Natural killer cell (primary cell): ENCODE measurements at regions of chr14 and their contacts with region 1.

Region 1: DNA sequence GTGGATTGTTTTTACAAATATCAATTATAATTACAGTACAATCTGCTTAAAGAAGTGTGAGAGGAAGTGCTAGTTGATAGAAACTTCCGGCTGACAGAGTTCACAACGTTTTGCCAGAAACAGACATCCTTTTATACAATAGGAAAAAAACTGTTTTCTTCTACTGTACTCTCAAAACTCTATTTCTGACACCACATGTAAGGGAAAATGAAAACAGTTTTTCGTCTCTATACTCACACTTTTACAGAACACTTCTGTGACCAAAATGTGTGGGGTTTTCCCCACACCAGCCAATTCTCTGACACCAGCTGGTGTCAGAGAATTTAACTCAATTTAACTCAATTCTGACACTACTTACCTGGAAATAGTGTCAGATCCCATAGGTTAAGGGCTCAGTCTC is 24.2 kb upstream of the HIF1A start:
- DNase-seq: peak; percentile 23 to 84
- ATAC-seq: peak; percentile 92 to 96 (median 94)
- H3K4me3 ChIP-seq: no peak overlapping the region
- H3K4me3 Mint-ChIP-seq: no peak overlapping the region
- H3K27ac ChIP-seq: peak overlapping the region; percentile 99
- H3K27ac Mint-ChIP-seq: no peak overlapping the region
- H3K4me1 ChIP-seq: peaks cover 35% of the 10 kb centered on the region
- H3K4me1 Mint-ChIP-seq: peaks cover 4 to 6% of the 10 kb centered on the region in 2 donors
- H3K27me3 ChIP-seq: no peaks in the 10 kb centered on the region
- H3K27me3 Mint-ChIP-seq: no peaks in the 10 kb centered on the region
- CTCF ChIP-seq: no peak

Region 2: DNA sequence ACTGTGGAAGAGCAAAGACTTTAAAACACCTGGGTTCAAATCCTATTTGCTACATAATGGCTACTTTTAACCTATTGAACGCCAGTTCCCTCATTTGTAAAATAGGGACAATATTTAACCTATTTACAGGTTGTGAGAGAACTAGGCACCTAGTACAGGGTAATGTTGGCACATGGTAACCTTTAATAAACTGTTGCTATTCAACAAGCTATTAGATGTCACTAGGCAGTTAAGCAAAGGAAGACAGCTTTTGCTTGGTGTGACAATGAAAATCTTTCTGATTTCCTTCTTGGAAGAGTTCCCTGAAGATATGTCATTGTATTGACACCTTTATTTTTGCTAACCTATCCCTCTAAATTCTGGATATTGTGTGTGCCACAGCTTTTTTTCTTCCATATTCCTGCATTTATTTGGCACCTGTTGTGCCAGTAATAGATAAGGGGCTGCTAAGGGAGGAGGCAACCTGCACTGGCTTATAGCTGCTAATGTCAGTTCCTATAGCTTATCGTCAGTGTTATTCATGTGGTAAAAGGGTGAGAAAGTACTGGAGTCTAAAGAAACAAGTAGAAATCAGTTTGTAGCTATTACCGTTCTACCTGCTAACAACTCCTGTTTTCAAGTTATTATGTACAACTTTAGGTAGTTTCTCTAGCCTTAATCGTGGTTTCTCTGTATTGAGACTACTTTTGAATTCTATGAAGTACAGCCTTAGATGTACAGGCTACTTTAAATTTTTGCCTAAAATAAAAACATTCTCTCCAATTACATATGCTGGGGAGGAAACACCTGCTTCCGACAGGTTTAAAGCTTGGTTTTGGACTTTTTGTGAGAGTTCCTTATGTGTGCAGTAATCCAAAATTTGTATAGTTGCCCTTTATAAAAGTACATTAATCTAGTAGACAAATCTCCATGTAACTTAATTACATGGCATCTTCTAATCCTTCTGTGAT is 48.5 kb after region 1 on chr14:
- intact Hi-C with region 1: loop called (anchors 2 kb)
- DNase-seq: peak in 1 of 2 donors; percentile 60
- ATAC-seq: peak; percentile 87 to 91 (median 90)
- H3K4me3 ChIP-seq: no peak overlapping the region
- H3K4me3 Mint-ChIP-seq: peak overlapping the region; percentile 76
- H3K27ac ChIP-seq: peak overlapping the region; percentile 42
- H3K27ac Mint-ChIP-seq: peak overlapping the region; percentile 76 to 87
- H3K4me1 ChIP-seq: peaks cover 13% of the 10 kb centered on the region
- H3K4me1 Mint-ChIP-seq: peaks cover 39 to 44% of the 10 kb centered on the region in 2 donors
- H3K27me3 ChIP-seq: no peaks in the 10 kb centered on the region
- H3K27me3 Mint-ChIP-seq: no peaks in the 10 kb centered on the region
- CTCF ChIP-seq: no peak